ENCODE measurements at regions of chr6 and their contacts with region 1.

Region 1: DNA sequence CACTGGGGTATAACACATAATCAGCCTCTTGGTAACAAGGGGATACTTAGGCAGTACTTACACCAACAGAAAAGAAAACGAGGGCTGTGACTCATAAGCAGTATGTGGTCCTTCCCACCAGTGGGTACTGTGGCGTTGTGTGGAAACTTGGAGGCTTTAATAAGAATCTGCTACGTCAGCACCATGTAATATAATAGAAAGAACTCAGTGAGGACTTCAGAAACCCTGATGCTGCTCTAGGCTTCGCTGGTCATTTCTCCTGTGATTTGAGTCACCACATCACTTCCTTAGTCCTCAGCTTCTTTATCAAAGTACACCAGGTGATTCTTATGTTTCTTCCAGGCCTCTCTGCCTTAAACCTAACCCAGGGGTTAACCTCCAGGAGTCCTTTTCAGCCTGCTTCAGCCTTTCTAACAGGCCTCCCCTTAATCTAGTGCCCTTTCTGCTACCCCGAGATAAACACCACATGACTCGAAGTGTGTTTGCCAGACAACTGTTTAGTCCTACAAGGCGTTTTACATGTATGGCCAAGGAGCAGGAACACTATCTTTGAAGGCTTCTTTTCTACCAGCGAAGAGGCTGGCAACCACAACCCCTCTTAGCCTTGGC is 68.5 kb downstream of the FYN start:
- DNase-seq: no peak
- ATAC-seq: peak; percentile 69
- H3K4me3 Mint-ChIP-seq: peak overlapping the region; percentile 55
- H3K27ac Mint-ChIP-seq: peak overlapping the region; percentile 90
- H3K4me1 Mint-ChIP-seq: peaks cover 53% of the 10 kb centered on the region
- H3K27me3 Mint-ChIP-seq: no peaks in the 10 kb centered on the region
- CTCF ChIP-seq: no peak

Region 2: GRCh38 chr6:111573892-111574797 is 230.6 kb before region 1 on chr6:
- CTCF ChIA-PET with region 1: no interaction called
- POLR2A ChIA-PET with region 1: interaction called, 11 read pairs
- intact Hi-C with region 1: no loop called
- DNase-seq: no peak
- ATAC-seq: no peak
- H3K4me3 Mint-ChIP-seq: no peak overlapping the region
- H3K27ac Mint-ChIP-seq: peak overlapping the region; percentile 79
- H3K4me1 Mint-ChIP-seq: peaks cover 24% of the 10 kb centered on the region
- H3K27me3 Mint-ChIP-seq: no peaks in the 10 kb centered on the region
- CTCF ChIP-seq: no peak

Region 3: GRCh38 chr6:111721753-111722154 is 83.0 kb before region 1 on chr6:
- CTCF ChIA-PET with region 1: no interaction called
- POLR2A ChIA-PET with region 1: no interaction called
- intact Hi-C with region 1: loop called (anchors 1 kb)
- DNase-seq: no peak
- ATAC-seq: peak; percentile 43
- H3K4me3 Mint-ChIP-seq: no peak overlapping the region
- H3K27ac Mint-ChIP-seq: peak overlapping the region; percentile 7
- H3K4me1 Mint-ChIP-seq: peaks cover 45% of the 10 kb centered on the region
- H3K27me3 Mint-ChIP-seq: no peaks in the 10 kb centered on the region
- CTCF ChIP-seq: no peak

Region 4: GRCh38 chr6:111793711-111794111 is 11.0 kb before region 1 on chr6:
- CTCF ChIA-PET with region 1: interaction called, 3 read pairs
- POLR2A ChIA-PET with region 1: interaction called, 3 read pairs
- intact Hi-C with region 1: loop called (anchors 1 kb)
- DNase-seq: no peak
- ATAC-seq: peak; percentile 47
- H3K4me3 Mint-ChIP-seq: no peak overlapping the region
- H3K27ac Mint-ChIP-seq: no peak overlapping the region
- H3K4me1 Mint-ChIP-seq: peaks cover 11% of the 10 kb centered on the region
- H3K27me3 Mint-ChIP-seq: no peaks in the 10 kb centered on the region
- CTCF ChIP-seq: no peak

Region 5: DNA sequence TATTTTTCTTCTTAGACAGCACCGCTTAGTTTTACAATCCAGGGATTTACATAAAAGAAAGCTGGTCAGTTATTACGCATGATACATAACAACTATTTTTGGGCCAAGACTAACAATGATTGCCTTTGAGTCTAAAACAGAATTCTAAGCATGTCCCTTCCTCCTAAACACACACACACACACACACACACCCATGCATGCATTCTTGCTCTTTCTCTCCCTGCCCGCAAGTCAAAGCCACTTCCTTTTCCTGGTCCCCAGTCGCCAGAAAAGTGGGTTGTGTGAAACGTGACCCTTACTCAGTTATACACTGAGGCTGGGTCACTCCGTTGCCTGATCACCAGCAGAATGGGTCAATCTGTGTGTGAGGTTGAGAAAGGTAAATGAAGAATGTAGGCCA is 37.1 kb after region 1 on chr6:
- CTCF ChIA-PET with region 1: interaction called, 8 read pairs
- POLR2A ChIA-PET with region 1: interaction called, 42 read pairs
- intact Hi-C with region 1: loop called (anchors 1 kb)
- DNase-seq: no peak
- ATAC-seq: no peak
- H3K4me3 Mint-ChIP-seq: no peak overlapping the region
- H3K27ac Mint-ChIP-seq: no peak overlapping the region
- H3K4me1 Mint-ChIP-seq: peaks cover 24% of the 10 kb centered on the region
- H3K27me3 Mint-ChIP-seq: no peaks in the 10 kb centered on the region
- CTCF ChIP-seq: no peak

Region 6: GRCh38 chr6:112029045-112029822 is 224.5 kb after region 1 on chr6:
- CTCF ChIA-PET with region 1: no interaction called
- POLR2A ChIA-PET with region 1: no interaction called
- intact Hi-C with region 1: loop called (anchors 1 kb)
- DNase-seq: peak; percentile 33
- ATAC-seq: no peak
- H3K4me3 Mint-ChIP-seq: no peak overlapping the region
- H3K27ac Mint-ChIP-seq: no peak overlapping the region
- H3K4me1 Mint-ChIP-seq: peaks cover 16% of the 10 kb centered on the region
- H3K27me3 Mint-ChIP-seq: peaks cover 3% of the 10 kb centered on the region
- CTCF ChIP-seq: peak; percentile 25